SK-MEL-5 (cell line): ENCODE measurements at regions of chr7 and their contacts with region 1.

Region 1: GRCh38 chr7:47991741-47992311 is 12.4 kb upstream of the HUS1 start:
- DNase-seq: peak; percentile 97

Region 2: GRCh38 chr7:47945261-47946001 is 46.4 kb before region 1 on chr7:
- in situ Hi-C with region 1: no loop called
- DNase-seq: peak; percentile 86

Region 3: DNA sequence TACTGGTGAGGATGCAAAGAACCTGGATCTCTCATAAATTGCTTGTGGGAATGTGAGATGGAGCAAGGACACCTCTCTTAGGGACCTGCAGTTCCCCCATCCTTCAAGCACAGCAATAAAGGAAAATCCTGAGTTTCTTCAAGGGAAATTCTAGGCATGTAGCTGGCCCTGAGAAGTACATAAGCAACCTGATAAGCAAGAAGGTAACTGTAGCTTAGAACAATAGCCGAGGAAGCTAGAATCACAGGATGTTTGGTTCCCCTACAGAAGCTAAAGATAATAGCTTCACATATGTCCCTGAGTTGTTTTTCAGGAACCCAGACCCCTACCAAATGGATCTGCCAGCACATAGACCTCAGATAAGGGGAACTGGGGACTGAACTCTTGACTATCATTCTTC is 85.6 kb after region 1 on chr7:
- in situ Hi-C with region 1: loop called (anchors 5 kb)
- DNase-seq: no peak